ENCODE measurements at regions of chr4 and their contacts with region 1.

Region 1: GRCh38 chr4:149264093-149264733 is 551.4 kb downstream of the IQCM start:
- DNase-seq: peak; percentile 74
- ATAC-seq: peak; percentile 92
- H3K4me3 ChIP-seq: no peak overlapping the region
- H3K27ac ChIP-seq: no peak overlapping the region
- H3K4me1 ChIP-seq: no peaks in the 10 kb centered on the region
- H3K27me3 ChIP-seq: no peaks in the 10 kb centered on the region
- CTCF ChIP-seq: peak; percentile 72
- POLR2A ChIP-seq: peak; percentile 43; the same call in 1 of the 2 replicates
- RAD21 ChIP-seq: peak; percentile 91

Region 2: DNA sequence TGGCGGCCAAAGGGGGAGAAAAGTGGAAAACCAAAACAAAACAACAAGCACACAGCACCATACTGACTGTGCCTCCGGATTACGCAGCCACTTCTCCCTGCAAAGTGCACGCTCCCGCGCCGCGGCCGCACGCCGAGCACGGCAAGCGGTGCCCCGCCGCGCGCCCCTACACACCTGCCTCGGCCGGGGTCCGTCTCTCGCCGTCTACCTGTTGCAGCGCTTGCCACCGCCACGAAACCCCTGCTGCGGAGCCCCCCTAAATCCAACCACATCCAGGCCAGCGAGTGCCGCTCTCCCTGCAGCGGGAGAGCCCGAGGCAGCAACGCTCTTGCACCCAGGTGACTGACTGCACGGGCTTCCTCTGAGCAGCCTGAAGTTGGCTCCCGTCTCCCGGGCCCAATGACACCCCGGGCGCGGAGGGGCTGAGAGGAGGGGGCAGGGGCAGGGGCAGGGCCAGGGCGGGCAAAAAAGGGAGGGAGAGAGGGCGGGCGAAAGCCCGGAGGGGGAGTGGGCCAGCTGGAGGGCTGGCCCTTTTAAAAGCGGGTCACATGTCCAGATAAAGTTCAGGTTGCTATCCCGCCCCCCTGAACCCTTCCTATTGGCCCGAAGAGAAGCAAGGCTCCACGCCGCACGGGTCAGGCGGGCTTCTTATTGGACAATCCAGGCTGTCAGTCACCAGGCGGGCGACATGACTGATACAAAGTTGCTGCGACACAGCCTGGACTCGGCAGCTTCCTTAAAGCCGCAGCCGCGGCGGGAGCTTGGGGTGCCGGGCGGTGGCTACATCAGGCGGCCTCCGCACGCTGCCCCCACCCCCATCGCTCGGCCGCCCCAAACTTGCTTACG is 822.0 kb before region 1 on chr4 and contains the start of gene NR3C2:
- CTCF ChIA-PET with region 1: no interaction called
- POLR2A ChIA-PET with region 1: no interaction called
- dilution Hi-C with region 1: no loop called
- in situ Hi-C with region 1: no loop called
- intact Hi-C with region 1: loop called (anchors 5 kb)
- DNase-seq: peak; percentile 96
- ATAC-seq: peak; percentile 96
- H3K4me3 ChIP-seq: peak within 1 kb of the TSS; percentile 66
- H3K27ac ChIP-seq: no peak within 1 kb of the TSS
- H3K4me1 ChIP-seq: no peaks in the 10 kb centered on the region
- H3K27me3 ChIP-seq: peaks cover 36% of the 10 kb centered on the region
- CTCF ChIP-seq: no peak
- POLR2A ChIP-seq: peak; percentile 56; the same call in 1 of the 2 replicates
- RAD21 ChIP-seq: no peak
- total RNA-seq, gene NR3C2: 1.9 and 2.3 TPM in 2 replicates

Region 3: GRCh38 chr4:148776941-148777340 is 487.3 kb before region 1 on chr4:
- CTCF ChIA-PET with region 1: no interaction called
- POLR2A ChIA-PET with region 1: no interaction called
- dilution Hi-C with region 1: no loop called
- in situ Hi-C with region 1: no loop called
- intact Hi-C with region 1: loop called (anchors 10 kb)
- DNase-seq: peak; percentile 81
- ATAC-seq: peak; percentile 86
- H3K4me3 ChIP-seq: peak overlapping the region; percentile 31; the same call in 1 of the 2 replicates
- H3K27ac ChIP-seq: no peak overlapping the region
- H3K4me1 ChIP-seq: peaks cover 10% of the 10 kb centered on the region; the same call in 1 of the 2 replicates
- H3K27me3 ChIP-seq: no peaks in the 10 kb centered on the region
- CTCF ChIP-seq: no peak
- POLR2A ChIP-seq: no peak
- RAD21 ChIP-seq: no peak

Region 4: DNA sequence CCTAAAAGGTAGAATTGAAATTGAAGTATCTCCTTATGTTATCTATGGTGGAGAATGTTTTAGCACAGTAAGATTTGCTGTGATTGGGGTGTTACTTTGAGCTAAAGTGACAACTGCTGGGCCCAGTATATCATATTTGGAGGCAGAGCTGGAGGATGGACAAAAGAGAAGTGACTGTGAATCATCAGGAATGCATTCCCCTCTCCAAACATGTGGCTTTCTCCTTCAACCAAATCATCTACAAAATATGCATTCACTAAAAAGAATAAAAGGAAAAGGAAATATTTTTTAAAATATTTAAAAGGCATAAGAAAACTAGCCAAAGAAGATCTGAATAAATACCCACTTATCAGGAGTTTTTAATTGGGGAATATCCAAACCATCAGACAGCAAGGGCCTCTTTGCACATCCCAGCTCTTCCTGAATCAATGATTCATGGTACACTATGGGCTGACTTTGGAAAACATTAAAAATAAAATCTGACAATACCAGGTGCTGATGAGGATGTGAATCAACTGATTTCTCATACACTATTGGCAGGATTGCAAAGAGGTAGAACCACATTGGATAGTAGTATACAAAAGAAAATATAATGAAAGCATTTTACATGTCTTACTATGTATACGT is 150.3 kb before region 1 on chr4:
- CTCF ChIA-PET with region 1: no interaction called
- POLR2A ChIA-PET with region 1: no interaction called
- dilution Hi-C with region 1: no loop called
- in situ Hi-C with region 1: no loop called
- intact Hi-C with region 1: loop called (anchors 5 kb)
- DNase-seq: peak; percentile 87
- ATAC-seq: peak; percentile 91
- H3K4me3 ChIP-seq: no peak overlapping the region
- H3K27ac ChIP-seq: no peak overlapping the region
- H3K4me1 ChIP-seq: peaks cover 5% of the 10 kb centered on the region
- H3K27me3 ChIP-seq: no peaks in the 10 kb centered on the region
- CTCF ChIP-seq: no peak
- POLR2A ChIP-seq: no peak
- RAD21 ChIP-seq: no peak

Region 5: DNA sequence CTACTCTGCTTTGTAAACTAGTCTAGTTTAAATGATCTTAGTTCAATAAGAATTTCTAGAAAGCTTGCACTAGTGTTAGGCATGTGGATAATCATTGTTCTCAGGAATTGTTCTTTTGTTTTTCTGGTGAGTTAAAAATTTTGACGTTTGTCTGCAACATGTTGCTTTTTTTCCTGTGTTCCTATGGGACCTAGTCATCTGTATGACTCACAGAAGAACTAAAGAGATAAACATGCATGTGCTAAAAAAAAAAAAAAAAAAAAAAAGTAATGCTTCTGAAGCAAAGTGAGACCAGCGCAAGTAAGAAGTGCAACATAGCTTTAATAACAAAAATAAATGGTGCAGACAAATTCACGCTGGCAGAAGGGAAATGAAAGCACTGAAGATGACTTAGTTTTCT is 80.2 kb after region 1 on chr4:
- CTCF ChIA-PET with region 1: no interaction called
- POLR2A ChIA-PET with region 1: no interaction called
- dilution Hi-C with region 1: no loop called
- in situ Hi-C with region 1: no loop called
- intact Hi-C with region 1: no loop called
- DNase-seq: peak; percentile 34
- ATAC-seq: peak; percentile 42; the same call in 1 of the 2 replicates
- H3K4me3 ChIP-seq: no peak overlapping the region
- H3K27ac ChIP-seq: no peak overlapping the region
- H3K4me1 ChIP-seq: no peaks in the 10 kb centered on the region
- H3K27me3 ChIP-seq: no peaks in the 10 kb centered on the region
- CTCF ChIP-seq: no peak
- POLR2A ChIP-seq: no peak
- RAD21 ChIP-seq: no peak

Measured in IMR-90 (cell line).